ENCODE measurements at regions of chr11 and their contacts with region 1.

Region 1: GRCh38 chr11:115803073-115803740 is 299.0 kb upstream of the CADM1 start:
- DNase-seq: no peak
- ATAC-seq: no peak
- H3K4me3 ChIP-seq: no peak overlapping the region
- H3K27ac ChIP-seq: no peak overlapping the region
- H3K4me1 ChIP-seq: no peaks in the 10 kb centered on the region
- H3K27me3 ChIP-seq: no peaks in the 10 kb centered on the region

Region 2: DNA sequence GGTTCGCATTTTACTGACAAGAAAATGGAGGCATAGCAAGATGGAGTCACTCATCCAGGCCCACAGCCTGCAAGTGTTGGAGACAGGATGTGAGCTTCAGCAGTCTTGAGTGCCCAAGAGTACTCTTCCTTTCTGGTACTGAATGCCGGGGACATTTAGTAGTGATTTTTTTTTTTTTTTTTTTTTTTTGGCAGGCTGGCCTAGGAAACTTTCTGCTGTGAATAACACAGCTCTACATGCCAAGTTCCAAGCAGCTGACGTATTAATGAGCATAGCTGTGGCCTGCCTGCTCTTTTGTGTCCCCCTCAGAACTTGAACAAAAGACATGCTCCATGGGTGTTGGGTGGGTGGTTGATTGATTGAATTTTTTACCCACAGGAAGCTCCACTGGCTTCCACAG is 103.5 kb before region 1 on chr11:
- intact Hi-C with region 1: no loop called
- DNase-seq: peak in 1 of 3 donors; percentile 33
- ATAC-seq: peak; percentile 88
- H3K4me3 ChIP-seq: no peak overlapping the region
- H3K27ac ChIP-seq: peak overlapping the region; percentile 66
- H3K4me1 ChIP-seq: peaks cover 6% of the 10 kb centered on the region
- H3K27me3 ChIP-seq: no peaks in the 10 kb centered on the region

Region 3: DNA sequence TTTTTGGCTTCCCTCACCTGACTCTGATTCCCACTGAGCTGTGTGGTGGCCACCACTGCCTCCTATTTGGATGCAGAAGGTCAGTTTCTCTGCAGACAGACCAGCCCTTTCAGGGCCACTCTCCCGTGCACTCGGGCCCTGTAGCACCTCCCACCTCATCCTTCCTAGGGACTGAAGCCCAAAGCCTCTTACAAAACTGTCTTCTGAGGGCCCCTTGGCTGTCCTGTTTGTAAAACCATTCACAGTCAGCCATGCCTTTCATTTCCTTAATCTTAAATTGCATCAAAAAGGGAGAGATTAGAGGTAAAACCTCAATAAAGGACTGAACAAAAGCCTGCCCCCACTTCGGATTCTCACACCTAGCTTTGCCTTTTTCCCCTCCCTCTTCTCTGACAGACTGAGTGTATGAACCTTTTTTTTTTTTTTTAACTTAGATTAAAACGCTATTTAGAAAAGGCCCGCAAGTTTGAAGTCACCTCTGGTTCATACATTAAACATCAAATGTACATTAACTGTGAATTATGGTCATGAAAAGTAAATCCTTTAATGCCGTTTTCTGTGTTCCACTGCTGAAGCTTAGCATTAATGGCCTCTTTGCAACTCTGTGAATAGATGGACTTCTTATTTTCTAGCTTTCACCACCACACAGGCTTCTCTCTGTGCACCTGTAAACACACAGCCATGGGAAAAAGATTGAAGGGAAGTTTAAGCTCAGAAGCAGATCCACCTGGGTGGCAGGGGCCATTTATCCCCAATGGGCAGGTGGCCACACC is 51.8 kb before region 1 on chr11:
- intact Hi-C with region 1: loop called in 1 of 4 experiments (anchors 5 kb)
- DNase-seq: no peak
- ATAC-seq: no peak
- H3K4me3 ChIP-seq: no peak overlapping the region
- H3K27ac ChIP-seq: no peak overlapping the region
- H3K4me1 ChIP-seq: no peaks in the 10 kb centered on the region
- H3K27me3 ChIP-seq: no peaks in the 10 kb centered on the region

Region 4: DNA sequence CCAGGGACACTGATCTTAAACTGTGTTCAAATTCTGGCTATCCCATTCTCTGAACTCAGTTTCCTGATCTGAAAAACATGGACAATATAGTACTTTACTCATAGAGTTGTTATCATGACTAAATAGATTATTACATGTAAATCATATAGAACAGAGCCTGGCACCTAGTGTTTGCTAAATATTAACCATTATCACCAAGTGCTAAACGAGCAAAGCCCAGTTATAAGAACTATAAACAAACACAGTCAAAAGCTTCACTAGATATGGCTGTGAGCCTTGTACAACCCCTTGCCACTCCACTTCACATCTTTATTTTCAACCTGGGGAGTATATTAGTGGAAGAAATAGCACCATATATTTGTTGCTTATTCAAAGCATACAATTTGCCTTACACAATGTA is 39.9 kb after region 1 on chr11:
- intact Hi-C with region 1: no loop called
- DNase-seq: no peak
- ATAC-seq: no peak
- H3K4me3 ChIP-seq: no peak overlapping the region
- H3K27ac ChIP-seq: no peak overlapping the region
- H3K4me1 ChIP-seq: no peaks in the 10 kb centered on the region
- H3K27me3 ChIP-seq: no peaks in the 10 kb centered on the region

Measured in right cardiac atrium (tissue), 5 donors.